GM13976 (cell line): ENCODE measurements at regions of chr1 and their contacts with region 1.

Region 1: GRCh38 chr1:243312952-243313634 is 57.3 kb downstream of the SDCCAG8 start:
- DNase-seq: peak; percentile 22
- CTCF ChIP-seq: no peak

Region 2: GRCh38 chr1:242467556-242468145 is 845.4 kb before region 1 on chr1:
- in situ Hi-C with region 1: loop called (anchors 25 kb)
- DNase-seq: peak; percentile 43
- CTCF ChIP-seq: peak; percentile 45

Region 3: DNA sequence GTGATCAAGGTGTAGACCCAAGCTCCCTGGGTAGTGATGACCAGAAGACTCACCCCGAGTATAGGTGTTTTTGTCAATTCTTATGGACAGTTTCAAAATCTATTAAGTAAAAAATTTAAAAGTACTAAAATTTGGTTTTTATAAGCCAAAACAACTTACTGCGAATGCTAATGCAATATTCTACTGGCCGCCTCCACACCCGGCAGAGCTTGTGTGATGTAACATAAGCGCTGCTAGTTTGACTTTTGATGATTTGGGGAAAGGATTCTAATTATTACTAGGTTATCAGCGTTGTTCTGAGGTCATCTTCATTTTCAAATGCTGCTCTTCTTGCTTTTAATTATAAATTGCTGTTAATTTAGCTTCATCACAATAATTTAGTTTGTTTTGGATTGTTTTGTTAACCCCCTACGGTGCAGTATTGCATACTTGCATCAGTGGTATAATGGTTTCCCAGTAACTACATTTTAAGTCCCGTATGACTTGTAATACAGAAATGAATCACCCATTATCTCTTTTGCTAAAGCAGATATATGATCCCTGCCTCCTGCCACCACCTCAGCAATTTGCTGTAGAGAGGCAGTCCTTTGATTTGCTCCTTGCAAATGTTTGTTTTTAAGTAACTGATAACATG is 120.8 kb after region 1 on chr1:
- in situ Hi-C with region 1: no loop called
- DNase-seq: no peak
- CTCF ChIP-seq: no peak